Stomach (tissue), 19 donors: ENCODE measurements at regions of chr17 and their contacts with region 1.

Region 1: DNA sequence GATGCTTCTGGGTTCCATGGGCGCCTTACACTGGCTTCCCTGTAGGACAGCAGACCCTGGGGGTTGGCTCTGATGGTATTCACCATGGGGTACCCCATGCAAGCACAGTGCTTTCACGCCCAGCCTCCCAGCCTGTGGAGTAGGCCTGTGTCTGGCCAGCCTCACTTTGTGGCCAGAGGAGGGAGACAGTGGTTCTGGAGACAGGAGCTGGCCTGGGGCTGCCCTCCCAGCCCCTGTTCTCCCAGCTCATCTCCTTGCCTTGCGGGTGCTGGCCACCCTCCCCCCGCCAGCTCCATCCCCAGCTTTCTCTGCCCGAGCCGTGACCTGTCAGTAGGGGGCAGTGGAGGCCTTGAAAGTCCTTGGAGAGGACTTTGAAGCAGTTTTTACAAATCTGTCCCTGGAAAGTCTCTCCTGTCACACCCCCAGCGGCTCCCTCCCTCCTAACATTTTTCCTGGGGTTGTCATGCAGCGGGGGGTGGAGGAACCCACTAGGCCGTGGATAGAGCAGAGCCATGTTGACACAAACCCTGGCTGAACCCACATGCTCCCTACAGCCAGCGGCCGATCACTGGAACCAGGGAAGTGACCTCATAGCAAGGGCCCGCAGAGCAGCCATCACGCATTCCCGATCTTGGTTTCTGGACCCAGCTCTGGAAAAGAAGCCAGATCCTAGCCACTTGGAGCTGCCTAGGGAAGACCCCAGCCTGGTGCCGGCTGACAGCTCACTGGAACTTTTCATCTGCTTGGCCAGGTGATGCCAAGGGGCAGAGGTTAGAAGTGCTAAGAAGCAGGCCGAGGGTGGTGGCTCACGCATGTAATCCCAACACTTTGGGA is 289.4 kb downstream of the SEC14L1 start:
- DNase-seq: peak; percentile 85 to 96
- H3K4me3 ChIP-seq: no peak overlapping the region
- H3K27ac ChIP-seq: peak overlapping the region; percentile 55 to 93 (median 91)
- H3K4me1 ChIP-seq: peaks cover 83 to 98% (median 87%) of the 10 kb centered on the region in 4 donors
- H3K27me3 ChIP-seq: no peaks in the 10 kb centered on the region
- CTCF ChIP-seq: peak in 5 of 7 experiments; percentile 64 to 85 (median 75)
- EP300 ChIP-seq: peak; percentile 75
- POLR2A ChIP-seq: no peak

Region 2: DNA sequence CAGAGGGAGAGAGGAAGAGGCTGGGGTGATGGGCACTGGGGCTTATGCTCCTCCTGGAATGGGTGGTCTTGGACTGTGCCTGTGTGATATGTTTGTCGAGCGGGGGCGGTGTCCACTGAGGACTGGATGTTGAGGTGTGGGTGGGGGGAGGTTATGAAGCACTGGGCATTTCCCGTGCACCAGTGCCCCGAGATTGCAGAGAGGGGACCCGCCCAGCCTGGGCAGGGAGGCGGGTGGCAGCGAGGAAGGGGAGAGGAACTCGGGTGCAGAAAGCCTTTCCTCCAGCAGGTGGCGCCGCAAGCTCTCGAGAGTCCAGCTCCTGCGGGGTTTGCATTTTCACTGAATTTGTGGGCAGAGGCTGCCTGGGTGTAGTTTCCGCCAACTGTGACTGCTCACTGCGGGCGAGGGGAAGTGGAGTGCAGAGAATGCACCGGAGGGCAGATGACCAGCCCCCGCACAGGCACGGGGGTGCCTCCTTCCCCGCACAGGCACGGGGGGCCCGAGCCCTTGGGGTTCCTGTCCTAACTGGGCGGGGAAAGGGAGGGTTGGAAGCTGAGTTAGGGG is 98.8 kb before region 1 on chr17:
- intact Hi-C with region 1: loop called (anchors 5 kb)
- DNase-seq: peak; percentile 96
- H3K4me3 ChIP-seq: peak overlapping the region in 3 of 4 donors; percentile 18 to 24 (median 20)
- H3K27ac ChIP-seq: peak overlapping the region in 4 of 5 donors; percentile 67 to 82 (median 80)
- H3K4me1 ChIP-seq: peaks cover 20 to 75% (median 35%) of the 10 kb centered on the region in 4 donors
- H3K27me3 ChIP-seq: no peaks in the 10 kb centered on the region
- CTCF ChIP-seq: peak in 5 of 7 experiments; percentile 92 to 98 (median 96)
- EP300 ChIP-seq: no peak
- POLR2A ChIP-seq: no peak

Region 3: DNA sequence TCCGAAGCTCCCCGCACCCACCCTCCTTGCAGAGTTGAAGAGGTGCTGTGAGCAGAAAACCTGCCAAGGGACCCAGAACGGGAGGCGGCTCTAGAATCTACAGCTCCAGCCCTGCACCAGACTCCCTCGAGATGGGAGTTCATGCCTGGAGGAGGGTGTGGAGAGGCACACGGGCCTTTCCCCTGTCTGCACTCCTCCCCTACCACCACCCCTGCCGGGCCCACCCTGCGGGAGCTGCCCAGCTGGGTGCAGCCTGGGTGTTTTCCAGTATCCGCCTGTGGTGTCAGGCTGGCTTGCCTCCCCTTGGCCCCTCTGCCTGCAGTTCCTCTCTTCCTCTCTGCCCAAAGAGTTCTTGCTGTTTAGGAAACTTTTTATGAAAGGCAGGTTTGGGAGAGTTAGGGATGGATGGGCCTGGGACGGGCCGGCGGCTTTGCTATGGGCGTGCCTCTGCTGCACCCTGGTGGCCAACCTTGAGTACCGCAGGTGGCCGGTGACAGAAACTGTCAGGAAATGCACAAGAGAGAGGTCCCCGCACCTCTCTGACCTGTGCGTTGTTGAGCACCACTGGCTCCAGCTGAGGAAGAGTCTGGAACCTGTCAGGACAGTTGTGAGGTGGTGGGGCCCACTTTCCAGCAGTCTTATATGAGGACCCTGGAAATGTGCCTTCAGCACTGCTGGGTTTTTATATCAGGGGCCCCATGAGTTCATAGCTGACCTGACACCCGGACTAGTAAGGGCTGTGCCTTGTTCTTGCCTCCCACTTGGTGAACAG is 64.7 kb after region 1 on chr17:
- intact Hi-C with region 1: loop called (anchors 5 kb)
- DNase-seq: peak; percentile 82 to 92
- H3K4me3 ChIP-seq: no peak overlapping the region
- H3K27ac ChIP-seq: peak overlapping the region in 4 of 5 donors; percentile 15 to 68 (median 46)
- H3K4me1 ChIP-seq: peaks cover 5 to 27% (median 17%) of the 10 kb centered on the region in 4 donors
- H3K27me3 ChIP-seq: no peaks in the 10 kb centered on the region
- CTCF ChIP-seq: peak in 6 of 7 experiments; percentile 96 to 99 (median 98)
- EP300 ChIP-seq: no peak
- POLR2A ChIP-seq: no peak